Left ventricle myocardium inferior (tissue), 1 donor: ENCODE measurements at regions of chr17 and their contacts with region 1.

Region 1: DNA sequence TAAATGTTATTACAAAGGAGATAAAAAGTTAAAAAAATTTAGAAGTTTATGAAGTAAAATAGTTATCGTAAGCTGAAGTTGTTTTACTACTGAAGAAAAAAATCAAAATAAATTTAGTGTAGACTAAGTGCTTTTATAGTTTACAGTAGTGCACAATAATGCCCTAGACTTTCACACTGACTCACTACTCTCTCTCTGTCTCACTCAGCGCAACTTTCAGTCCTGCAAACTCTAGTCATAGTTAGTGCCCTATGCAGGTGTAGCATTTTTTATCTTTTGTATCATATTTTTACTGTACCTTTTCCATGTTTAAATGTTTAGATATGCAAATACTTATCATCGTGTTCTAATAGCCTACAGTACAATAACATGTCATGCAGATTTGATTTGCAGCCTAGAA is 17.7 kb upstream of the TOM1L1 start:
- DNase-seq: no peak
- H3K4me3 ChIP-seq: no peak overlapping the region
- H3K27ac ChIP-seq: no peak overlapping the region
- H3K4me1 ChIP-seq: no peaks in the 10 kb centered on the region
- H3K27me3 ChIP-seq: no peaks in the 10 kb centered on the region
- CTCF ChIP-seq: no peak

Region 2: DNA sequence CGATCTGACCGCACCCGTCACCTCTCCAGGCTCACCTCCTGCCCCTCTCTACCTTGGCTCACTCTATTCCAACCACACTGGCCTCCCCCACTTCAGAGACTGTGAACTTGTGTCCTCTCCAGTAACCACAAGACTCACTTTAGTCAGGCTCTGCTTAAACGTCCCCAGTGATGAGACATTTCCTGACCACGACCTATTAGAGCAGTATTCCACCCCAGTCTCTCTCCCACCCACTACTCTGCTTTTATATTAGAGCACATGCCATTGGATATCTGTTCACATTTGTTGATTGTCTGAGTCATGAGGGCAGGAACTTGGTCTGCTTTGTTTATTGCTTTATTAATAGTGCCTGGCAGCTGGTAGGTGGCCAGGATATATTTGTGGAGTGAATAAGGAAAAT is 65.4 kb after region 1 on chr17:
- intact Hi-C with region 1: loop called (anchors 10 kb)
- DNase-seq: no peak
- H3K4me3 ChIP-seq: no peak overlapping the region
- H3K27ac ChIP-seq: no peak overlapping the region
- H3K4me1 ChIP-seq: no peaks in the 10 kb centered on the region
- H3K27me3 ChIP-seq: no peaks in the 10 kb centered on the region
- CTCF ChIP-seq: no peak